SK-N-SH (cell line): ENCODE measurements at regions of chr1 and their contacts with region 1.

Region 1: GRCh38 chr1:54547601-54548388 is at the start of gene ACOT11:
- DNase-seq: peak; percentile 93
- H3K4me3 ChIP-seq: peak within 1 kb of the TSS; percentile 41 to 44; a peak in 3 of 4 replicates
- H3K27ac ChIP-seq: peak within 1 kb of the TSS; percentile 82 to 96
- H3K4me1 ChIP-seq: peaks cover 28 to 64% of the 10 kb centered on the region in 2 experiments
- H3K27me3 ChIP-seq: no peaks in the 10 kb centered on the region
- CTCF ChIP-seq: peak; percentile 90
- EP300 ChIP-seq: peak; percentile 91 to 93; a peak in 3 of 4 replicates
- RAD21 ChIP-seq: peak; percentile 64
- polyA plus RNA-seq, gene ACOT11: 6.9 and 7.2 TPM in 2 replicates

Region 2: GRCh38 chr1:54384911-54385726 is 162.7 kb before region 1 on chr1:
- CTCF ChIA-PET with region 1: no interaction called
- POLR2A ChIA-PET with region 1: no interaction called
- DNase-seq: no peak
- H3K4me3 ChIP-seq: no peak overlapping the region
- H3K27ac ChIP-seq: no peak overlapping the region
- H3K4me1 ChIP-seq: peaks cover 0 to 8% of the 10 kb centered on the region in 2 experiments; a peak in 1 of 4 replicates
- H3K27me3 ChIP-seq: no peaks in the 10 kb centered on the region
- CTCF ChIP-seq: no peak
- EP300 ChIP-seq: no peak
- RAD21 ChIP-seq: no peak

Region 3: DNA sequence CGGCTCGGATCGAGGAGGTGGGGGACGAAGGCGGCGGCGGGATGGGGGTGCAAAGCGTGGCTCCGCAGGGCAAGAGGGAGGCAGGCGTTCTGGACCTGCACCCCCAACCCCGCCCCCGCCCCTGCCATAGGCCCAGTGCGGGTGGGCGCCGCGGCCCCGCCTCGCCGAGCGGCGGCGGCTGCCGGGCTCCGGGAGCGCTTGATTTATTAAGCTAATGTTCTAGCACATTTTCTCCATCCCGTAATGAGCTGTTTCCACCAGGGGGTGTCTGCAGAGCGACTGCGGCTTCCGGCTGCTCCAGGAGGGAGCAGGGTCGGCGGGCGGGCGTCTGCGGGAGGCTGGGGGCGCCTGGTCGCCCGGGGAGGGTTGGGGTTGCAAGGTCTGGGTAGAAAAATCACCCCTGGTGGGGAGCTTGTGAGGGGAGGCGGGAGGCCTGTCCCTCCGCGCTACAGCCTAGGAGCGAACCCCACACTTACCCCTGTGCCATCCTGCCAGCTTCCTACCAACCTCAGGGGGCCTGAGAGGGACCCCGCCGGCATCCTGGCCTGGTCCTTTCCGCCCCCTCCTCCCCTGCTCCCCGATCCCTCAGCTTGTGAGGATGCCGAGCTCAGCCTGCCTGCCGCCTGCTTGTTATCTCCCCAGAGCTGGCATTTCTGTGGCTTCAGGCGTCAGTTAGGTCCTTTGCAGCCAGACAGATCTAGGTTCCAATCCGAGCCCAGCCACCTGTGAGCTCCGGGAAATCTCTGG is 48.3 kb before region 1 on chr1:
- CTCF ChIA-PET with region 1: interaction called, 13 read pairs
- POLR2A ChIA-PET with region 1: interaction called, 9 read pairs
- DNase-seq: peak; percentile 84
- H3K4me3 ChIP-seq: peak overlapping the region; percentile 37 to 42; a peak in 3 of 4 replicates
- H3K27ac ChIP-seq: peak overlapping the region in 1 of 2 experiments; percentile 17; a peak in 1 of 4 replicates
- H3K4me1 ChIP-seq: peaks cover 0 to 20% of the 10 kb centered on the region in 2 experiments; a peak in 1 of 4 replicates
- H3K27me3 ChIP-seq: no peaks in the 10 kb centered on the region
- CTCF ChIP-seq: peak; percentile 44
- EP300 ChIP-seq: no peak
- RAD21 ChIP-seq: peak; percentile 48

Region 4: GRCh38 chr1:54506594-54506993 is 41.2 kb before region 1 on chr1:
- CTCF ChIA-PET with region 1: interaction called, 10 read pairs
- POLR2A ChIA-PET with region 1: no interaction called
- DNase-seq: no peak
- H3K4me3 ChIP-seq: no peak overlapping the region
- H3K27ac ChIP-seq: no peak overlapping the region
- H3K4me1 ChIP-seq: no peaks in the 10 kb centered on the region
- H3K27me3 ChIP-seq: no peaks in the 10 kb centered on the region
- CTCF ChIP-seq: no peak
- EP300 ChIP-seq: no peak
- RAD21 ChIP-seq: no peak

Region 5: GRCh38 chr1:54532033-54532432 is 15.8 kb before region 1 on chr1:
- CTCF ChIA-PET with region 1: no interaction called
- POLR2A ChIA-PET with region 1: no interaction called
- DNase-seq: no peak
- H3K4me3 ChIP-seq: no peak overlapping the region
- H3K27ac ChIP-seq: no peak overlapping the region
- H3K4me1 ChIP-seq: no peaks in the 10 kb centered on the region
- H3K27me3 ChIP-seq: no peaks in the 10 kb centered on the region
- CTCF ChIP-seq: no peak
- EP300 ChIP-seq: no peak
- RAD21 ChIP-seq: no peak

Region 6: DNA sequence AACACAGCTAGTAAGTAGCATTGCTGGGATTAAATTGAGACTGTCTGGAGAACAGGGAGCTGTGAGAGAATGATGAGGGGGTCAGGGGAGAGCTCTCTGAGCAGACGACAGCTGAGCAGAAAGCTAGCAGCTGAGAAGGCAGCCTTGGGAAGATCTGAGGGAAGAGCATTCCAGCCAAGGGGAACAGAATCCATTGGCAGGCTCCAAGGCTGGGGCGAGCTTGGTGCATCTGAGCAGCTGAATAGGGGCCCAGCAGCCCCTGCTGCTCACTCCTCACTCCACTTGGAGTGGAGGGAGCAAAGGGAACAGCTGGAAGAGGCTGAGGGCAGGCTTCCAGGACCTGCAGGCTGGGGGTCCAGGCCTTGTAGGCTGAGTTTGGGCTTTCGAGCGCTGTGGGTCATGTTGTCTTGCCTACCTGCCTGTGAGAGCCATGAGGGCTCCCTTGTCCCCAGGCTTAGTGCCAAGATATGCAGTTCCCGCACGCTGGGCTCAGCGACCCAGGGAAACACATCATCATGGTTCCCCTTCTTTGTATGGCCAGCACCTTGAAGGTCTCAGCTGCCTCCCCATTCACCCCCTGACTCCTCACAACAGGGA is 10.7 kb after region 1 on chr1:
- CTCF ChIA-PET with region 1: interaction called, 25 read pairs
- POLR2A ChIA-PET with region 1: interaction called, 13 read pairs
- DNase-seq: no peak
- H3K4me3 ChIP-seq: no peak overlapping the region
- H3K27ac ChIP-seq: peak overlapping the region in 1 of 2 experiments; percentile 3; a peak in 2 of 4 replicates
- H3K4me1 ChIP-seq: peaks cover 5 to 21% of the 10 kb centered on the region in 2 experiments; a peak in 2 of 4 replicates
- H3K27me3 ChIP-seq: no peaks in the 10 kb centered on the region
- CTCF ChIP-seq: no peak
- EP300 ChIP-seq: no peak
- RAD21 ChIP-seq: no peak

Region 7: GRCh38 chr1:54571803-54572541 is 24.2 kb after region 1 on chr1:
- CTCF ChIA-PET with region 1: interaction called, 40 read pairs
- POLR2A ChIA-PET with region 1: no interaction called
- DNase-seq: peak; percentile 52
- H3K4me3 ChIP-seq: no peak overlapping the region
- H3K27ac ChIP-seq: peak overlapping the region in 1 of 2 experiments; percentile 67; a peak in 2 of 4 replicates
- H3K4me1 ChIP-seq: peaks cover 14 to 27% of the 10 kb centered on the region in 2 experiments; a peak in 2 of 4 replicates
- H3K27me3 ChIP-seq: no peaks in the 10 kb centered on the region
- CTCF ChIP-seq: no peak
- EP300 ChIP-seq: no peak
- RAD21 ChIP-seq: no peak

Region 8: DNA sequence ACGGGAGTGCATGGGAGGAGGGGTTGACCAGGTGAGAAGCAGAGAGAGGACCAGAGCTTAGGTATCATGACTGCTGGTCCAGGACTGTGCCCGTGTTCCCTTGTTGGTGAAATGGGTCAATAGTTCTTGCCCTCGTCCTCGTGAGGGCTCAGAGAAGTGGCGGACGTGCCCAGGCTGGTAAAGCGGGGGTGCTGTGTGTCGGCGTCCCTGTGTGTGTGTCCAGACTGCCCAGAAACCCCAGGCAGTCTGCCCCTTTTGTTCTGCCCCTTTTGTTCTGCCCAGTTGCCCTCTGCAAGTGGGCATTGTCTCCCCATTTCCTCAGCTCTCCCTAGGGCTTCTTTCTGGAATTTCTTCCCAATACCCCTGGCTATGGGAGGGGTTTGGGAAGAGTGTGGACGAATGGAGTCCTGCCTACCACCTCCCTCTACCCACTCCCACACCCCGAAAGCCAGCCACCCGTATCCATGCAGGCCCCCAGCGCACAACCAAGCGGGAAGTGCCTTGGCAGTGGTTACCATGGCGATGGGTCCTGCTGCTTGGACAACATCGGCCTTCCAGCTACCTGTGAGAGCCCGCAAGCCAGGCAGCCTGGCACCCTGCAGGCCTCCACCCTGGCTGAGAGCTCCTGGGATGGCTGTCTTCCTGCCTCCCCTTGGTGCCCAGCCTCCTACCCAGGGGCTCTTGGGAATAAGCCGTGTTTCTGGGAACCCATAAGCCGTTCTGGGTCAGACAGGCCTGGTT is 34.9 kb after region 1 on chr1:
- CTCF ChIA-PET with region 1: interaction called, 13 read pairs
- POLR2A ChIA-PET with region 1: interaction called, 5 read pairs
- DNase-seq: peak; percentile 66
- H3K4me3 ChIP-seq: no peak overlapping the region
- H3K27ac ChIP-seq: peak overlapping the region in 1 of 2 experiments; percentile 89; a peak in 2 of 4 replicates
- H3K4me1 ChIP-seq: peaks cover 7 to 51% of the 10 kb centered on the region in 2 experiments; a peak in 3 of 4 replicates
- H3K27me3 ChIP-seq: no peaks in the 10 kb centered on the region
- CTCF ChIP-seq: no peak
- EP300 ChIP-seq: no peak
- RAD21 ChIP-seq: no peak

Region 9: DNA sequence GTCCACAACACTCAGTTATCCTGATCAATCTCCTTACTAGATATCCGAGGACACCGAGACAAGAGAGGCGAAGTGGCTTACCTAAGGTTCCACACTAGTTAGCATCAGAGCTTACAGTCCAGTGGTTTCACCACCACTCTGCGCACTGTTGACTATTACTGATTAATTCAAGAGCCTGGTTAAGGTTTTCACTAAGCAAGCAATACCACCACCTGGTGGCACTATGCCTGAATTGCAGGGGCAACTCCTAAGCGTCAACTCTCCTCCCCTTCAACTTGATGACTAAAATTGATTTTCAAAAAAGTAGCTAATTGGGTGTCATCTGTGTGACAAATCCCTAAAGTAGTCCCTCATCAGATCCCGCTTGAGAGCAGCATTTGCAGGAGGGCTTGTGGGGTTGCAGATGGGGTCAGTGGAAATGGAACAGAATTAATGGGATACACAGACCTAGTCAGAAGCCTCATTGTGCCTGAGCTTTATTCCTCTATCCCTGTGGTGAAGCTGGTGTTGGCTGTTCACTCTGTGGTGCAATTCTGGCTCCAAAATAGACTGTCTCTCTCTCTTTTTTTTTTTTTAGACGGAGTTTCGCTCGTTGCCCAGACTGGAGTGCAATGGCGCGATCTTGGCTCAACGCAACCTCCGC is 244.2 kb after region 1 on chr1:
- CTCF ChIA-PET with region 1: interaction called, 11 read pairs
- POLR2A ChIA-PET with region 1: no interaction called
- DNase-seq: peak; percentile 63
- H3K4me3 ChIP-seq: no peak overlapping the region
- H3K27ac ChIP-seq: no peak overlapping the region; a peak in 1 of 4 replicates
- H3K4me1 ChIP-seq: peaks cover 5 to 40% of the 10 kb centered on the region in 2 experiments; a peak in 2 of 4 replicates
- H3K27me3 ChIP-seq: no peaks in the 10 kb centered on the region
- CTCF ChIP-seq: peak; percentile 62
- EP300 ChIP-seq: no peak
- RAD21 ChIP-seq: peak; percentile 65